BJ (cell line): ENCODE measurements at regions of chr15 and their contacts with region 1.

Region 1: GRCh38 chr15:68550481-68551295 is 28.1 kb upstream of the CORO2B start:
- DNase-seq: no peak
- H3K4me3 ChIP-seq: no peak overlapping the region
- H3K27me3 ChIP-seq: peaks cover 1% of the 10 kb centered on the region; the same call in 1 of the 2 replicates
- CTCF ChIP-seq: peak; percentile 86

Region 2: DNA sequence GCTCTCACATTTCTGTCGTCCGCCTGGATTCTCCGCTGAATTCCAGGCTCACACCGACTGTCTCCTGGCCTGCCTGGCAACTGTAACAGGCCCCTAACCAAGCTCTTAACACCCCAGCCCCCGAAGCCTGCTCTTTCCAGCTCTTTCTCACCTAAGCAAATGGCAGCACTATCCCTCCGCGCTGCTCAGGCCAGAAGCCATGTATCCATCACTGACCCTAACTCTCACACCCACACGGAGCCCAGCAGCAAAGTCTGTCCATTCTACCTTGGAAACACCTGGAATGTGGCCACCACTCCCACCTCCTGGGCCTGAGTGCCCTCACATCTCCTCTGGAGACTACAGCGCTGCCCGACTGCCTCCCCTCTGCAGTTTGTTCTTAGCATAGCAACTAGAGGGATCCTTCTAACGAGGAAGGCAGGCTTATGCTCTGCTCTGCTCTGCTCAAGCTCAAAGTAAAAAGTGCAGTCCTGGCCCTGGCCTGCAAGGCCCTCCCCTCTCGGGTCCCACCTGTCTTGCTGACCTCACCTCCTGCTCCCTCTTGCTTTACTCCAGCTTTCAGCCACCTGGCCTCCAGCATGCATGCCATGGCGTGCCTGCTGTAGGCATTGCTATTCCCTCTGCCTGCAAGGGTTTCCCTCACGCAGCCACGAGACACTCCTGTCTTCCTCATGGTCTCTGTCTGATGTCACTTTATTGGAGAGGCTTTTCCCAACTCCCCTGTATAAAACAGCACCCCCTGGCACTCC is 245.9 kb before region 1 on chr15:
- CTCF ChIA-PET with region 1: interaction called, 41 read pairs
- POLR2A ChIA-PET with region 1: no interaction called
- DNase-seq: no peak
- H3K4me3 ChIP-seq: no peak overlapping the region
- H3K27me3 ChIP-seq: no peaks in the 10 kb centered on the region
- CTCF ChIP-seq: no peak

Region 3: GRCh38 chr15:68536331-68537095 is 14.2 kb before region 1 on chr15:
- CTCF ChIA-PET with region 1: interaction called, 44 read pairs
- POLR2A ChIA-PET with region 1: no interaction called
- DNase-seq: peak; percentile 96
- H3K4me3 ChIP-seq: no peak overlapping the region
- H3K27me3 ChIP-seq: no peaks in the 10 kb centered on the region
- CTCF ChIP-seq: no peak

Region 4: GRCh38 chr15:68666120-68666811 is 115.6 kb after region 1 on chr15:
- CTCF ChIA-PET with region 1: interaction called, 153 read pairs
- POLR2A ChIA-PET with region 1: no interaction called
- DNase-seq: no peak
- H3K4me3 ChIP-seq: no peak overlapping the region
- H3K27me3 ChIP-seq: no peaks in the 10 kb centered on the region
- CTCF ChIP-seq: no peak

Region 5: GRCh38 chr15:68679961-68680371 is 129.3 kb after region 1 on chr15:
- CTCF ChIA-PET with region 1: interaction called, 153 read pairs
- POLR2A ChIA-PET with region 1: interaction called, 4 read pairs
- DNase-seq: no peak
- H3K4me3 ChIP-seq: no peak overlapping the region
- H3K27me3 ChIP-seq: no peaks in the 10 kb centered on the region; the same call in 1 of the 2 replicates
- CTCF ChIP-seq: no peak

Region 6: GRCh38 chr15:68924866-68925560 is 374.3 kb after region 1 on chr15:
- CTCF ChIA-PET with region 1: interaction called, 27 read pairs
- POLR2A ChIA-PET with region 1: no interaction called
- DNase-seq: peak; percentile 13
- H3K4me3 ChIP-seq: no peak overlapping the region
- H3K27me3 ChIP-seq: peaks cover 6% of the 10 kb centered on the region
- CTCF ChIP-seq: peak; percentile 92